Activated B cell treated with CpG ODN at 0.5 μM for 24 hours (primary cell): ENCODE measurements at regions of chr11 and their contacts with region 1.

Region 1: DNA sequence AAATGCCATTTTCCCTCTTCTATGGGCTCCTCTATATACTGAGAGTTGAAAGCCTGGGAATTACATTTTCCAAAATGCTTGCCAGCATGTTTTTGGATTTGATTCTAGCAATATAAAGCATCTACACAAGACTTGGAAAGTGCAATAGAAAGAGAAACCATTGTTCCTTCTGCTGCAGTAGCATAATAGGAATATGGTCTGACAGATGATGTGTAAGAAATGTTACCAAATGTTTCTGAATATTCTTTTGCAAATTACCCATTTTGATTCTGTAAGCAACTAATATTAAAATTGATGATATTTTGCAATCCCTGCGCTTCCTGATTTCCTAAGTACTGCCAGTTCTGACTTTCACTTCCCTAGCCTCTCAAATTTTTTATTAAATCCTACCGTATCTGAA is 61.6 kb downstream of the CASP12 start:
- DNase-seq: no peak
- ATAC-seq: no peak
- H3K4me3 Mint-ChIP-seq: no peak overlapping the region
- H3K27ac Mint-ChIP-seq: no peak overlapping the region
- H3K4me1 Mint-ChIP-seq: peaks cover 28% of the 10 kb centered on the region
- H3K27me3 Mint-ChIP-seq: no peaks in the 10 kb centered on the region
- CTCF ChIP-seq: no peak

Region 2: DNA sequence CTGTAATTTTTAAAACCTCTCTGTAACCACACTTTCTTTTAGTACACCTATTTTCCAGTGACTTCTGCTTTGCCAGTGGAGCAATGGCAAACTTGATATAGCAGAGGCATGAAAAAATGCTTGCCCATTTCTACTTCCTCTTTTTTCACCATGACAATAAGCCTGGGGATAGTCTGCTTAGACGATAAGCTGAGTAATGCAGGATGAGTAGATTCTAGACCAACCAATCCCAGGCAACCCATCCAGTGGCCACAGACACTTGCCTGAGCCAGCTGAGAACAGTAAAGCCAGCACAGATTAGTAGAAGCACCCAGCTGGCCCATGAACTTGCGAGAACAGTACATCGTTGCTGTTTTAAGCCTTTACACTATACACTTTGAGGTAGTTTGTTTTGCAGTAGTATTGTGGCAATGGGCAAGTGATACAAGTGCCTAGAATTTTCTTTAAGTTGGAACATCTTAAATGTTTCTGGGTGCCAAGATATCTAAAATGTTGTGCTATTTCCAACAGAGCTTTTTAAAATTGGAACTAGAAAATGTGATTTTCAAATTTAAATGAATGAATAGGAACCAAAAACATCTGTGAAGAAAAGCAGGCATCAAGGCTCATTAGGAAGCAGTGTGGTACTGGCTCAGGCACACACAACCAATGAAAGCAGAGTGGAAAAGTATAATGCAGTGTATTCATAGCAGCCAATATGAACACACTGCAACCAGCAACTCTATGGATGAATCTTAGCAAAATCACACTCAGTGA is 762.6 kb before region 1 on chr11:
- CTCF ChIA-PET with region 1: no interaction called
- POLR2A ChIA-PET with region 1: no interaction called
- intact Hi-C with region 1: no loop called
- DNase-seq: no peak
- ATAC-seq: peak; percentile 85
- H3K4me3 Mint-ChIP-seq: no peak overlapping the region
- H3K27ac Mint-ChIP-seq: no peak overlapping the region
- H3K4me1 Mint-ChIP-seq: peaks cover 26% of the 10 kb centered on the region
- H3K27me3 Mint-ChIP-seq: no peaks in the 10 kb centered on the region
- CTCF ChIP-seq: no peak

Region 3: DNA sequence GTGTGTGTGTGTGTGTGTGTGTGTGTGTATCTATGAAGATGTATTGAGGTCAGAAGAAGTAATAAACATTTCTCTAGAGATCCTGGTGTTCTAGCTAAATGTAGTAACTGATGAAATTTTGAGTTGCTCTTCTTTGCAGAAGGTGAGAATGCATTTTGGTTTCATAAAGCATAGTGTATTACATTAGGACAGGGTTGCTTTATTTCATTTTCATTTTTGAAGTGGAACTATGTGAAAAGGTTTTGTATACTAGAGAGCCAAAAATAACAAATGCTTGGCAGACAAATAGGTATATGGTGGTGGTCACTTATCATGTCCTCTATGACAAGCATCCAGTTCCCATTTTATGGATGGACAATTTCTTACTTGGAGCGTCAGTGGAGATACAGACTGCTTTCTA is 37.4 kb before region 1 on chr11:
- CTCF ChIA-PET with region 1: no interaction called
- POLR2A ChIA-PET with region 1: no interaction called
- intact Hi-C with region 1: loop called (anchors 2 kb)
- DNase-seq: no peak
- ATAC-seq: peak; percentile 57
- H3K4me3 Mint-ChIP-seq: peak overlapping the region; percentile 74
- H3K27ac Mint-ChIP-seq: peak overlapping the region; percentile 91
- H3K4me1 Mint-ChIP-seq: peaks cover 30% of the 10 kb centered on the region
- H3K27me3 Mint-ChIP-seq: no peaks in the 10 kb centered on the region
- CTCF ChIP-seq: no peak

Region 4: GRCh38 chr11:104823638-104824037 is 13.1 kb before region 1 on chr11:
- CTCF ChIA-PET with region 1: no interaction called
- POLR2A ChIA-PET with region 1: no interaction called
- intact Hi-C with region 1: loop called (anchors 2 kb)
- DNase-seq: no peak
- ATAC-seq: no peak
- H3K4me3 Mint-ChIP-seq: no peak overlapping the region
- H3K27ac Mint-ChIP-seq: no peak overlapping the region
- H3K4me1 Mint-ChIP-seq: peaks cover 4% of the 10 kb centered on the region
- H3K27me3 Mint-ChIP-seq: no peaks in the 10 kb centered on the region
- CTCF ChIP-seq: peak; percentile 15

Region 5: GRCh38 chr11:104858882-104859775 is 22.4 kb after region 1 on chr11:
- CTCF ChIA-PET with region 1: no interaction called
- POLR2A ChIA-PET with region 1: no interaction called
- intact Hi-C with region 1: loop called (anchors 2 kb)
- DNase-seq: peak; percentile 18
- ATAC-seq: peak; percentile 92
- H3K4me3 Mint-ChIP-seq: peak overlapping the region; percentile 68
- H3K27ac Mint-ChIP-seq: peak overlapping the region; percentile 87
- H3K4me1 Mint-ChIP-seq: peaks cover 34% of the 10 kb centered on the region
- H3K27me3 Mint-ChIP-seq: no peaks in the 10 kb centered on the region
- CTCF ChIP-seq: no peak

Region 6: DNA sequence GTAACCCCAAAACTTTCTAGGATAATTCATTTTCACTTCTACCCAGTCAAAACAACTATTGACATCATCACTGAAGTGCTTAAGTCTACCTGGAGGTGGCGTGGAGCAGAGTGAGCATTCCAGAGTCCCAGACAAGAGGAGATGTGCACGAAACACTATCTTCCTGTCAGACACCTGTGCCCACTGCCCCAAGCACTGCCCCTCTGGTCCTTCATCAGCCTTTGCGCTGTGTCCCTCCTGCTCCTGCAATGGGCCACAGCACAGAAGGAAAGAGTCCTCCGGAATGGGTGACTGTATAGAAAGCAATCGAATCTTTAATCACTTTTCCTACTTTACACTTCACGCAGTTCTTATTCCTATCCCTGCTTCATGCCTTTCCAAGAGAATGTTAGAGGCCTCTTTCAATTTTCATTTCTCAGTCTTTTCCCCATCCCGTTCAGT is 772.7 kb after region 1 on chr11:
- CTCF ChIA-PET with region 1: no interaction called
- POLR2A ChIA-PET with region 1: no interaction called
- intact Hi-C with region 1: no loop called
- DNase-seq: no peak
- ATAC-seq: no peak
- H3K4me3 Mint-ChIP-seq: no peak overlapping the region
- H3K27ac Mint-ChIP-seq: no peak overlapping the region
- H3K4me1 Mint-ChIP-seq: no peaks in the 10 kb centered on the region
- H3K27me3 Mint-ChIP-seq: peaks cover 33% of the 10 kb centered on the region
- CTCF ChIP-seq: no peak